Activated CD8-positive, alpha-beta memory T cell treated with anti-CD3 and anti-CD28 coated beads, Interleukin-2, amount 10 ng/mL, durations not matched to agents 7 days and 5 days (primary cell): ENCODE measurements at regions of chr2 and their contacts with region 1.

Region 1: DNA sequence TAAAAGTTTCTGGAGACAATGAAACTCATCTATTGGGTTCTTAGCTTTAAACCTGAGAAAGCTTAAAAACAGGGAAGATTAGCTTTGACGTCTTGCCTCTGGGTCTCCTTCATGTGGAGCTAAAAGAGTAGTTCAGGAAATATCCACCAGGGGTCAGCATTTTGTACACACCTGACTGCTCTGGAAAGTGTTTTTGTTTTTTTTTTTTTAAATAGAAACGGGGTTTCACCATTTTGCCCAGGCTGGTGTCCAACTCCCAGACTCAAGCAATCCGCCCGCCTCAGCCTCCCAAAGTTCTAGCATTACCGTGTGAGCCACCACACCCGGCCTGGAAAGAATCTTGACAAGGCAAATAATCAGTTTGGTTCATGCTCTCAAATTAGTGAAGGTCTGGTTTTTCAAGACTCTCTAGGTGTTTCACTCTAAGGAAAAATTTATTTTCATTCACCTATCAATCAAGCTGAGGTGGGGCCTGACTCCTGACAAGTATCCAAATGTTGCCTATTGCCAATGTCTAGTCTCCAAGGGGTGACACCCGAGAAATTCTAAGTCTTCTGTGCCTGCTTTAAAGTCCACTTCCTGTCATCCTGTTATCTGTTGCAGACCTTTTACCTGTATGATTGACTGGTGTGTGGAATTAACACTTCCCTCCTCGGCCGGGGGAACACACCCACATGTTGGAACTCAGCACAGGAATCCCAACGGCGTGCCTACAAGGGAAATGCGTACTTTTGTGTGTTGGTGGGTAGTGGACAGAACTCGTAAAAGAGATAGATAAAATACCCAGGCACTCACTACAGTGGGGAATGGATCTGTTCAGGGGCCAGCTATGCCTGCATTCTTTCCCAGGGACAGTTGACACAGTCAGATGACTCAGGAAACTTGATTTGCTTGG is 11.3 kb downstream of the IL1RN start:
- DNase-seq: peak; percentile 67
- ATAC-seq: peak; percentile 81
- H3K4me3 Mint-ChIP-seq: peak overlapping the region; percentile 21
- H3K27ac Mint-ChIP-seq: peak overlapping the region; percentile 72
- H3K4me1 Mint-ChIP-seq: peaks cover 27% of the 10 kb centered on the region
- H3K27me3 Mint-ChIP-seq: no peaks in the 10 kb centered on the region

Region 2: GRCh38 chr2:112947374-112947773 is 191.3 kb before region 1 on chr2:
- CTCF ChIA-PET with region 1: no interaction called
- DNase-seq: no peak
- ATAC-seq: no peak
- H3K4me3 Mint-ChIP-seq: no peak overlapping the region
- H3K27ac Mint-ChIP-seq: no peak overlapping the region
- H3K4me1 Mint-ChIP-seq: no peaks in the 10 kb centered on the region
- H3K27me3 Mint-ChIP-seq: peaks cover 42% of the 10 kb centered on the region

Region 3: GRCh38 chr2:113098041-113098440 is 40.6 kb before region 1 on chr2:
- CTCF ChIA-PET with region 1: interaction called, 11 read pairs
- DNase-seq: peak; percentile 50
- ATAC-seq: peak; percentile 89
- H3K4me3 Mint-ChIP-seq: peak overlapping the region; percentile 76
- H3K27ac Mint-ChIP-seq: peak overlapping the region; percentile 95
- H3K4me1 Mint-ChIP-seq: peaks cover 41% of the 10 kb centered on the region
- H3K27me3 Mint-ChIP-seq: no peaks in the 10 kb centered on the region

Region 4: DNA sequence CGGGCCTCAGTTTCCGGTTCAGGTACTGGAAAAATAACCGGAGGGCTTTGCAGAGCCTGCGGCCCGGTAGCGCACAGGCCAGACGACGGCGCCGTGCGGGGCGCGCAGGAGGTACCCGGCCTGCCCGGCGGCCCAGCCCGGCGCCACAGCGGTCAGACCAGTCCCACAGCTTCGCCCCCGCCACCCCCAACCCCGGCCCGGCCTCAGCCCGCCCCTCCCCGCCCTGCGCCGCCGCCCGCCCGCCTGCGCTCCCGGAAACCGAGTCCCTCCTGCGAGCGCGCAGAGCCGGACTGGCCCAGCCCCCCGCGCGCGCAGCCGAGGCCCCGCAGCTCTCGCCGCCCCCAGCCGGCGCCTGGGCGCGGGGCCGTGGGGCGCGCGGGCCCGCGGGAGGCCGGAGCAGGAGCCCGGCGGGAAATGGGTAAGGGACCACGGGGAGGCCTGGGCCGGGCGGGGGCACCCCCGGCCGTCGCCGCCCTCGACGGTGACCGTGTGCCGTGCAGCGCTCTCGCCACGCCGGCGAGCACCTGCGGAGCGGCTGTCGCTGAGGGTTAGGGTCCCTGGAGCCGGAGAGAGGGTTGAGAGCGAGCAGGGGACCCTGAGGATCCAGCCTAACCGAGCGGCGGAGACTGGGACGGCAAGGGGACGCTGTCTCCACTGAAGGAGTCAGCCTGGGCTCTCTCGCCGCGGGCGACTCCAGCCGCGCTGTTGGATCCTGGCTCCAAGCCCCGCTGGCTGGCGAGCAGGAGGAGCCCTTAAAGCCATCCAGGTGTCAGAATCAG is 18.6 kb after region 1 on chr2:
- CTCF ChIA-PET with region 1: interaction called, 62 read pairs
- DNase-seq: peak; percentile 67
- ATAC-seq: peak; percentile 93
- H3K4me3 Mint-ChIP-seq: peak overlapping the region; percentile 80
- H3K27ac Mint-ChIP-seq: peak overlapping the region; percentile 79
- H3K4me1 Mint-ChIP-seq: peaks cover 17% of the 10 kb centered on the region
- H3K27me3 Mint-ChIP-seq: peaks cover 9% of the 10 kb centered on the region

Region 5: DNA sequence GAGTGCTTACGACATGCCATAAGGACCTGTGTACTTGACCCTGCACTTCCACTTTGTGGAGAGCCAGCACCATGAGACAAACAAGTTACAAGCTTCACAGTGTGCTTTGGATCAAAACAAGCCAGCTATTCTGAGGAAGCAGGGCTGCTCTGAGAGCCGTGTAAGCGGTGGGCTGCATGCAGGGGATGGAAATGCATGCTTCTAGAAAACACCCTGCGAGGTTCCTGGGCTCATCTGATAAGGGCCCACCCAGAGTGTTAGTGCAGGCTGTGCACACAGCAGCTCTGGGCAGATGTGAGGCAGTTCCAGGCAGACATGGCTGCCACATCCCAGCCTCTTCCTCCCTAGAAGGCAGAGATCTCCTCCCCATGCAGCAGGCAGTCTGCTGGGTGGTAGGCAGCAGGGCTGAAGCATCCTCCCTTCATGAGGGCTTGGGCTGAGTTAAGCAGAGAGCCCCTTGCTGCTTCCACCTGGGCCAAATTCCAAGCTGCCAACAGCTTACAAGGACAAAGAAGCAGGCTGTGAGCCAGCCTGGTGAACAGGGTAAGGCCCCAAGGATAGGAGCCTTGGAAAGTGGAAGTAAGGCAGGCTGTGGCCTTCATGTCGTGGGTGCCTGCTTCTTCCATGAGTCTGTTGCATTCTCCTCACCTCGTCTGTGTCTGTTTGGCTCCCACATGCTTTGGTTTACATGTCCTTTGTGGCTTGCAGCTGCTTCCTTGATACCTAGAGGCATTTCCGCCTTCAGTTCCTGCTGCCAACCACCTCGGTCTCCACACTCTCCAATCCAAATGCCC is 42.8 kb after region 1 on chr2:
- CTCF ChIA-PET with region 1: interaction called, 107 read pairs
- DNase-seq: no peak
- ATAC-seq: peak; percentile 25
- H3K4me3 Mint-ChIP-seq: peak overlapping the region; percentile 89
- H3K27ac Mint-ChIP-seq: peak overlapping the region; percentile 87
- H3K4me1 Mint-ChIP-seq: peaks cover 93% of the 10 kb centered on the region
- H3K27me3 Mint-ChIP-seq: no peaks in the 10 kb centered on the region

Region 6: DNA sequence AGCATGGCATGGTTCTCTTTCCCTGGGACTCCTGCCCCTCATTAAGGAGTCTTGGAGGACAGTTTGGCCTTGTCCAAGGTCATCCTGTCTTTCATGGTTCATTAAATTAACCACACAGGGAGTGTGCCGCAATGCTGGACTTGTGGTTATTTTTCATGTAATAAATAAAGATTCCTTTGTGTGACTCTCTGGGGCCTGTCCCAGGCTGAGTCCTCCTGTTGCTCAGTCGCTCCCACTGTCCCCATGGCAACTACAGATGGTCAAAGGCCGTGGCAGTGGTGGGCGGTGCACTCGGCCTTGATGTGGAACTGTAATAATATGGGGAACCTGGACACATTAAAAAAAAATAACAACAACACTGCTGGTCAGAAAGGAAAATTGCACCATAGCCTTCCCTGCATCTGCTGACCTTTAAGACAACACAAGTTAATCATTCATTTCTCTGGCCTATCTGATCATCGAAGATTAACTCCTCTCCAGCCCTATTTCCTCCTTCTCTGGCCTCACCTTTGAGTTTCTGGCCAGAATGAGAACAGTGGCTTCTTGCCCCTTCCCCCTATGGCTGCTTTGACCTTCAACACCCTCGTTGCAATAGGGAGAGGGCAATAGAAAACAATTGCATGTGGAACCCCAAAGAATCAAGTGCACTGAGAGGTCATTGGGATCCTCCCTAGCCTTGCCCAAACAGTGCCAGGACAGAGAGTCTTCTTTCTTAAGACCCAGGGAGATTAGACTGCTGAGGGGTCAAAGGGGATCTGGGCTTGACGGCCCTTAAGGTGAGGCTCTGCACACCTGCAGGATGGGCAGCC is 79.8 kb after region 1 on chr2:
- CTCF ChIA-PET with region 1: interaction called, 10 read pairs
- DNase-seq: no peak
- ATAC-seq: no peak
- H3K4me3 Mint-ChIP-seq: no peak overlapping the region
- H3K27ac Mint-ChIP-seq: no peak overlapping the region
- H3K4me1 Mint-ChIP-seq: peaks cover 27% of the 10 kb centered on the region
- H3K27me3 Mint-ChIP-seq: peaks cover 2% of the 10 kb centered on the region

Region 7: DNA sequence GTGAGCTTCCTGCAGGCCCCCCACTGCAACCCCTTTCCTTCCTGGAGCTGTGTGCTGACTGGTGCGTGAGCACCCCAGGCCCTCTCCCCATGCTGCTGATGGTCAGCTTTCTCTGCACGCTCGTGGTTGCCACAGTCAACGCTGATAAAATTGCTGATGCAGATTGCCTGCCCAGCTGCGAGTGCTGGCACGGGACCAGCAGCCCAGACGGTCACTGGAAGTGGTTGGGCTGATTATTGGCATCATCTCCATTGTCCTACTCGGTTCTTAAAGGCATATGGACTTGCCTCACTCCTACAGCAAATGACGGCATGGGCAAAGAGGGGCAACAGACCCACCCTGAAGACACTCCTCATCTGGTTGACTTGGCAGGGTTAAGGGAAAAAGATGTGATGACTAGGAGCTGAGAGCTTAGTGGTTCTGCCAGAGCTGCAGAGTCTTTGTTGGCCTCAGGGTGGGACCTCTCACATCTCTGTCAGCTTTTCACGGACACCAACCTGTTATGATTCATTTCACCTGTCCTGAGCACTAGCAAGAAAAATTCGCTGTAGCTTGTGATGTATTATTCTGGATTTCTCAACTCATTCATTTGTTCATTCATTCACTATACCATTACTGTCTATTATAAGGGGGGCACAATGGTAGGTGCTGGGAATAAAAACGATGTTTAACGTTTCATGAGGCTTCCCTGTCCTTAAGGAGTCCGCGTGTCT is 101.6 kb after region 1 on chr2:
- CTCF ChIA-PET with region 1: interaction called, 13 read pairs
- DNase-seq: no peak
- ATAC-seq: no peak
- H3K4me3 Mint-ChIP-seq: no peak overlapping the region
- H3K27ac Mint-ChIP-seq: no peak overlapping the region
- H3K4me1 Mint-ChIP-seq: peaks cover 39% of the 10 kb centered on the region
- H3K27me3 Mint-ChIP-seq: no peaks in the 10 kb centered on the region